Right cardiac atrium (tissue), 5 donors: ENCODE measurements at regions of chr16 and their contacts with region 1.

Region 1: GRCh38 chr16:50665128-50665878 is 15.8 kb downstream of the SNX20 start:
- DNase-seq: peak; percentile 75 to 88 (median 86)
- ATAC-seq: peak; percentile 81 to 87
- H3K4me3 ChIP-seq: peak overlapping the region; percentile 62
- H3K27ac ChIP-seq: peak overlapping the region; percentile 53
- H3K4me1 ChIP-seq: no peaks in the 10 kb centered on the region
- H3K27me3 ChIP-seq: no peaks in the 10 kb centered on the region

Region 2: DNA sequence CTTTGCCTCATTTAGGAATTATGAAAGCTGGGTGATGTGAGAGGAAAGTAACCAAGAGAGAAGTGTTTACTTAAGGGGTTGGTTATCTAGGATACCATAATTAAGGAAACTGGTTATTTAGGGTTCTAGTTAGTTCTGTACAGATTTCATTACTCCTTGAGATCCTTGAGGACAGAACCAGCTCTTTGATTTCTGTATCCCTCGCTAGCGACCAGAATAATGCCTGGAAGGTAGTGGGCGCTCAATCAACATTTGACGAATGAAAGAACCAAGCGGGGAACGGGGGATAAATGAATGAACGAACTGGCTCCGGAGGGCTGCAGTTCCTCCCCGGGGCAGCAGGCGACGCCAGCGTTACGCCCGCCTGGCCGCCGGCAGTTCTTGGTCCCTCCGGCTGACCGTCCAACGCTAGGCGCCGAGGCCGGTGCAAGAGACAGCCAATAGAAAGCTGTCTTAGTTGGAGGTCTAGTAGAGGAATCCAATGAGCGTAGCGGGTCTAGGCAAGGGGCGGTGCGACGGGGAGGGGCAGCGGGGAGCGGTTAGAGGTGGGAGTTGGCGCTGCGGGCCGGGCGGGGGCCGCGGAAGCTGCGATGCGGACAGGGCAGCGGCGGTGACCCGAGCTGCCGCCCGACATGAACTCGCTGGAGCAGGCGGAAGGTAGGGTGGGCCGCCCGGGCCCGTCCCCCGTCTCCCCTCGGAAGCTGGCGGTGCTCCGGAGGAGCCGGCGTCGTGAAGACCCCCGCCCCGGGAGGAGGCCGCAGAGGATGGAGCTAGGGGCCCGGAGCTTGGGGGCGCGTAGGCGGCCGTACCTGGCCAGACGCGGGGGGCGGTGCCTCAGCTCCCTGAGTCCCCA is 640.4 kb before region 1 on chr16 and contains the start of gene CNEP1R1:
- intact Hi-C with region 1: loop called in 2 of 4 experiments (anchors 10 kb)
- DNase-seq: peak; percentile 94 to 97 (median 97)
- ATAC-seq: peak; percentile 100
- H3K4me3 ChIP-seq: peak within 1 kb of the TSS; percentile 99
- H3K27ac ChIP-seq: peak within 1 kb of the TSS; percentile 73
- H3K4me1 ChIP-seq: no peaks in the 10 kb centered on the region
- H3K27me3 ChIP-seq: no peaks in the 10 kb centered on the region
- total RNA-seq, gene CNEP1R1: 14.1 to 20.6 (median 19.1) TPM

Region 3: GRCh38 chr16:50210266-50211038 is 454.9 kb before region 1 on chr16:
- intact Hi-C with region 1: loop called in 2 of 4 experiments (anchors 10 kb)
- DNase-seq: peak; percentile 82 to 93 (median 88)
- ATAC-seq: peak; percentile 94 to 96
- H3K4me3 ChIP-seq: no peak overlapping the region
- H3K27ac ChIP-seq: no peak overlapping the region
- H3K4me1 ChIP-seq: peaks cover 5% of the 10 kb centered on the region
- H3K27me3 ChIP-seq: no peaks in the 10 kb centered on the region

Region 4: DNA sequence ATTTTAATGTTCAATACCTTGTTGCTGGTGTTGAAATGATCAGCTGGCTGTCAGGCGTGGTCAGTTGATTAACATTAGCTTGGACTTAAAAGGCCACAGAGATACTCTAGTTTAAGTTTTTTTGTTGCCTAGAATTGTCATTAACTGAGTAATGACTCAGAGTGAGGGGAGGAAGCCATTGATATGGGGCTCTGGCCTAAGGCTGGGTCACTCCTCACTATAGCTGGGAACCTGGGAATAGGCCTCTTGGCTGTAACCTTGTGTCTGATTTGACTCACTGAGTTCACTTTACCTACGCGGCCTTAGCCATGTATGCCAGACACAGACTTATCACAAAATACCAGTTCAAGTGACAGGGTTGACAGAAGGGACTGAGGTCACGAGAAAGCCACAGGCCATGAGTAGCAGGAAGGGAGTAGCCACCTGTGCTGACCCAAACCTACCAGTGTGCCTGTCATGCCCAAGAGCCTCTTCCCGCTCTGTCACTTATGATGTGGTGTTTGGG is 436.9 kb before region 1 on chr16:
- intact Hi-C with region 1: loop called in 1 of 4 experiments (anchors 10 kb)
- DNase-seq: no peak
- ATAC-seq: no peak
- H3K4me3 ChIP-seq: no peak overlapping the region
- H3K27ac ChIP-seq: no peak overlapping the region
- H3K4me1 ChIP-seq: no peaks in the 10 kb centered on the region
- H3K27me3 ChIP-seq: no peaks in the 10 kb centered on the region

Region 5: GRCh38 chr16:50371936-50372595 is 293.2 kb before region 1 on chr16:
- intact Hi-C with region 1: loop called in 3 of 4 experiments (anchors 5 kb)
- DNase-seq: peak; percentile 43 to 69 (median 65)
- ATAC-seq: peak; percentile 44 to 46
- H3K4me3 ChIP-seq: no peak overlapping the region
- H3K27ac ChIP-seq: no peak overlapping the region
- H3K4me1 ChIP-seq: peaks cover 3% of the 10 kb centered on the region
- H3K27me3 ChIP-seq: no peaks in the 10 kb centered on the region

Region 6: GRCh38 chr16:50603206-50604064 is 61.9 kb before region 1 on chr16:
- intact Hi-C with region 1: loop called in 1 of 4 experiments (anchors 5 kb)
- DNase-seq: peak in 2 of 3 donors; percentile 69 to 73
- ATAC-seq: peak; percentile 38 to 78
- H3K4me3 ChIP-seq: no peak overlapping the region
- H3K27ac ChIP-seq: no peak overlapping the region
- H3K4me1 ChIP-seq: peaks cover 4% of the 10 kb centered on the region
- H3K27me3 ChIP-seq: no peaks in the 10 kb centered on the region